ENCODE measurements at regions of chr1 and their contacts with region 1.

Region 1: DNA sequence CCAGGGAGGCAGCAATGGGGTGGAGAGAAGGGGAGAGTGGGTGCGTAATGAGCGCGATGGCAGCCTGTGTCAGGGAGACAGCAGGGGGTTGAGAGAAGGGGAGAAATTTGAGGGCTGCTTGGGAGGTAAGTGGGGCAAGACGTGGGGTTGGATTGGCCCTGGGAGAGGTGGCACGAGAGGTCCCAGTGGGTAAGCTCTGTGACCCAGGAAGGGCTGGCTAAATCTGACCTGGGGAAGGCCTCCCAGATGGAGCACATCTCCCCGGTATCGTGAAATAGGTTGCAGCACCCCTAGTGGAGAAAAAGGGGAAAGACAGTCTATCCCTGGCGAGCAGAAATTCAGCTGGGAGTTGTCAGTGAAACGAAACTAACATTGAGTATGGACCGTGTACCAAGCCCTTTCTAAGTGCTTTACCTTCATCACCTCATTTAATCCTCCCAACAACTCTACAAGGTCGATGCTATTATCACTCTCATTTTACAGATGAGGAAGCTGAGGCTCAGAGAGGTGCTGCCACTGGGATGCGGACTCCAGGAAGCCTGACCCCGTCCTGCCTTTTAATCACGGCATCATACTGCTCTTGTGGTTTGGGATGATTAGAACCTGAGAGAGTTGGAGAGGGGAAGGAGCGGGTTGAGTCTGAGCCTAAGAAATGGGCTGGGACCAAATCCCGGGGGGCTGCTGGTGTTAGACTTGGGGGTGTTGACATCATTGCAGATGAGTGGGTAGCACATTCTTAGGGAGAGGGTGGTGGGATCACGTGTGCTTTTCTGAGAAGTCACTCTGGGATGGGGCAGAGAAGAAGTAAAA is 56.6 kb upstream of the RPL11 start:
- DNase-seq: peak; percentile 47
- H3K4me3 ChIP-seq: peak overlapping the region; percentile 34
- H3K27me3 ChIP-seq: no peaks in the 10 kb centered on the region
- CTCF ChIP-seq: peak; percentile 93

Region 2: DNA sequence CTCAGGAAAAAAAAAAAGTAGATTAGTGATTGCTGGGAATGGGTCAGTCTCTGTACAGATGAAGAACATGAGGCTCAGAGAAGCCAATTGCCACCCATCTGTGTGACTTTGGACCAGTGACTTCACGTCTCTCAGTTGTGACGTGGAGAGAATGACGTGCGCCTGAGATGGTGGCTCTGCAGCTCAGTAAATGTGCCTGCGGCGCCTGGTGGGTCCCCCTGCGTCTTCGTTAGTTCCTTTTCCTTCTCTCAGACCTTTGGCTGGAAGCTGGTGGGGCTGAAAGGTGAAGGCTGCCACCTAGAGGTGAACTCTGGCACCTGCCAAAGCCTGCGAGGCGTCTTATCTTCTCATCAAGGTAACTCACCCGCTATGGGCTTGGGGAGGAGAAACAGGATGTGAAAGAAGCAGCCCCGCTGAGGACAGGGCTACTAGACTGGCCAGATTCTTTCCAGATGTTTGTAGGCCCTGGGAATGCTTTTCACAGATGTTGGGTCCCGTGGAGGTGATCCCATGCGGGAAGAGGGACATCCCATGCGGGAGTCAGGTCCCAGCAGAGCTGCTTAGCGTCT is 95.3 kb before region 1 on chr1:
- CTCF ChIA-PET with region 1: interaction called, 644 read pairs
- POLR2A ChIA-PET with region 1: interaction called, 3 read pairs
- DNase-seq: peak; percentile 69
- H3K4me3 ChIP-seq: no peak overlapping the region
- H3K27me3 ChIP-seq: no peaks in the 10 kb centered on the region
- CTCF ChIP-seq: peak; percentile 93

Region 3: DNA sequence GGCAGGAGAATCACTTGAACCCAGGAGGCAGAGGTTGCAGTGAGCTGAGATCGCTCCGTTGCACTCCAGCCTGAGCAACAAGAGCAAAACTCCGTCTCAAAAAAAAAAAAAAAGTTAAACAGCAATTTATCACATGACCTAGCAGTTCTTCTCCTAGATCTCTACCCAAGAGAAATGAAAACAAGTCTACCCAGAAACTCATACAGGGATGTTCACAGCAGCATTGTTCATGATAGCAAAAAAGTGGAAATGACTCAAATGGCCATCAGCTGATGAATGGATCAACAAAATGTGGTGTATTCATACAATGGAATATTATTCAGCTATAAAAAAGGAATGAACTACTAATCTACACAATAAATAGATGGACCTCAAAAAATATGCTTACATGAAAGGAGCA is 63.6 kb before region 1 on chr1:
- CTCF ChIA-PET with region 1: interaction called, 26 read pairs
- POLR2A ChIA-PET with region 1: no interaction called
- DNase-seq: no peak
- H3K4me3 ChIP-seq: no peak overlapping the region
- H3K27me3 ChIP-seq: no peaks in the 10 kb centered on the region
- CTCF ChIP-seq: no peak

Region 4: GRCh38 chr1:23591460-23592208 is 43.4 kb before region 1 on chr1:
- CTCF ChIA-PET with region 1: interaction called, 16 read pairs
- POLR2A ChIA-PET with region 1: no interaction called
- DNase-seq: no peak
- H3K4me3 ChIP-seq: no peak overlapping the region
- H3K27me3 ChIP-seq: no peaks in the 10 kb centered on the region
- CTCF ChIP-seq: no peak

Region 5: GRCh38 chr1:23613191-23614031 is 21.6 kb before region 1 on chr1:
- CTCF ChIA-PET with region 1: interaction called, 17 read pairs
- POLR2A ChIA-PET with region 1: no interaction called
- DNase-seq: no peak
- H3K4me3 ChIP-seq: no peak overlapping the region
- H3K27me3 ChIP-seq: peaks cover 2% of the 10 kb centered on the region; the same call in 1 of the 2 replicates
- CTCF ChIP-seq: no peak

Region 6: DNA sequence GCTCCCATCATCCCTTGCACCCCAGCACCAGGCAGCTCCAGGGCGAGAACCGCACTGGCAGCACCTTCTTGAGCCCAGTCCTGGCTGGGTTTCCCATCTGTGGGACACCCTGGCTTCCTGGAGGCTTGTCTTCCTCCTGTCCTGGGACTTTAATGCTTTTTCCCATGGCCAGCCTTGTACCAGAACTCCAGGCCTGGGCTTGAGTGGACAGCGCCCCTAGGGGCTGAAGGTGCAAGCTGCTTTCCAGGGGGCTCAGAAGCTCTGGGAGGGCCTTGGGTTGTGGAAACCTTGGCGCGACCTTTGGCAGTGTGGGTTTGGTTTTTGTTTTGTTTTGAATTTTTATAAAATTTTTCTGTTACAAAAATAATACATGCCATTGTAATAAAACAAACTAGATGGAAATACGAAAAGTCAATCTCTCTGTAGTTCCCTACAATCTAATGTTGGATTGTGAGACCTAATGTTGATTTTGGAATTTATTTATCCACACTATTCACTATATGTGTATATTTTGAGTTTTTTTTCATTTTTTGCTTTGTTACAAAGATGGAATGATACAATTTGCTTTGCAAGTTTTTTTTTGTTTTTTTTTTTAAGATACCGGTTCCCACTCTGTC is 22.7 kb after region 1 on chr1:
- CTCF ChIA-PET with region 1: interaction called, 17 read pairs
- POLR2A ChIA-PET with region 1: no interaction called
- DNase-seq: no peak
- H3K4me3 ChIP-seq: no peak overlapping the region
- H3K27me3 ChIP-seq: no peaks in the 10 kb centered on the region
- CTCF ChIP-seq: peak; percentile 89

Region 7: DNA sequence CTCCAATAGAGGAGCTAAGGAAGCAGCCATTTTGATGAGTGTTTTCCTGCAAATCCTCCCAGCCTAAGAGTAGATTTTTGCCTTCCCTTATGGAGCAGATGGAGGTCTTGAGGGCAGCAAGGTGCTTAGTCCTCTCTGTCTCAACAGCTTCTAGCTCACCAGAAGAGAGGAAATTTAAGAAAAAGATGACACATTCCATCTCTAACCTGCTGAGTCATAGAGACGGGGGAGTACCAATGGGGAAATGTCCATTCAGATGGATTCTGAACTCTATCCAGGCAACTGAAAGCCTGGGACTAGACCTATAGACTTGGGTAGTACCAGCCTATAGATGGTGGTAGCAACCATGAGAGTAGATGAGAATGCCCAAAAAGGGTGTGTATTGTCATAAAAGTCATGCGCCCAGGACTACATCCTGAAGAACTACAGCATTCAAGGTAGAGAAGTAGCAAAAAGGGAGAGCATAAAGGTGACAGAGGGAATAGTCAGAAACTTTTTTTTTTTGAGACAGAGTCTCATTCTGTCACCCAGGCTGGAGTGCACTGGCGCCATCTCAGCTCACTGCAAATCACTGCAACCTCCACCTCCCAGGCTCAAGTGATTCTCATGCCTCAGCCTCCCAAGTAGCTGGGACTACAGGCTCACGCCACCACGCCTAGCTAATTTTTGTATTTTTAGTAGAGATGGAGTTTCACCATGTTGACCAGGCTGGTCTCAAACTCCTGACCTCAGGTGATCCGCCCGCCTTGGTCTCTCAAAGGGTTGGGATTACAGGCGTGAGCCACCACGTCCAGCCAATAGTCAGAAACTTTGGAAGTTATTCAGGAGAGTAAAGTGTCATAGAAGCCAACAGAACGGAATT is 97.5 kb after region 1 on chr1:
- CTCF ChIA-PET with region 1: no interaction called
- POLR2A ChIA-PET with region 1: no interaction called
- DNase-seq: no peak
- H3K4me3 ChIP-seq: no peak overlapping the region
- H3K27me3 ChIP-seq: no peaks in the 10 kb centered on the region
- CTCF ChIP-seq: no peak

Measured in BJ (cell line).